Cardiac septum (tissue), 1 donor: ENCODE measurements at regions of chr11 and their contacts with region 1.

Region 1: DNA sequence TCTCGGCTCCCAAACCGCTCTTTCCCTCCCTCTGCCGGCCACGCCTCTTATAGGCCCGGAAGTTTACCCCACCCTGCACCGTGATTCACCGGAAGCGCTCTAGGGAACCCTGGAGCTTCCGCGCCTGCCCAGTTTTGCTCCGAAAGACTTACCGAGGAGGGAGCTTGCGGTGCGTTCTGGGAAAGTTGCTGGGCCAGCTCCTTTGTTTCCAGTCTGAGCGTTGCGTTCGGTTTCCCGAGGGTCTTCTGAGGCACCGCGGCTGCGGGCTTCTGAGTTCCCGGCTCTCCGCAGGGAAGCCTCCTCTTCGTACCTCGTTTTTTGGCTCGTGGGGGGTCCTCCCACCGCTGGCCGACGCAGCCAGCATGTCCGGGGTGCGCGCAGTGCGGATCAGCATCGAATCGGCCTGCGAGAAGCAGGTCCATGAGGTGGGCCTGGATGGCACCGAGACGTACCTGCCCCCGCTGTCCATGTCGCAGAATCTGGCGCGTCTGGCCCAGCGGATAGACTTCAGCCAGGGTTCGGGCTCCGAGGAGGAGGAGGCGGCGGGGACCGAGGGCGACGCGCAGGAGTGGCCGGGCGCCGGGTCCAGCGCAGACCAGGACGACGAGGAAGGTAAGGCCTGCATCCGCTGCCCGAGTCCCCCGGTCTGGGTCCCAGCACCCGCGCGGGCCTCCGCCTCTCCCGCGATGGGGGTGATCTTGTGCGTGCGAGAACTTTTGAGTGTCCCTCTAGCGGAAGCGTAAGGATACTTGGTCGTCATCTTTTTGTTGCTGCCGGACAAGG is at the start of gene MED17:
- DNase-seq: peak; percentile 97
- total RNA-seq, gene MED17: 24.3 TPM

Region 2: GRCh38 chr11:93741094-93741881 is 43.1 kb before region 1 on chr11 and contains the starts of genes C11orf54 and TAF1D:
- intact Hi-C with region 1: loop called (anchors 2 kb)
- DNase-seq: peak; percentile 98
- total RNA-seq, gene C11orf54: 19.9 TPM
- total RNA-seq, gene TAF1D: 41.1 TPM